CD4-positive, alpha-beta memory T cell (primary cell): ENCODE measurements at regions of chr3 and their contacts with region 1.

Region 1: DNA sequence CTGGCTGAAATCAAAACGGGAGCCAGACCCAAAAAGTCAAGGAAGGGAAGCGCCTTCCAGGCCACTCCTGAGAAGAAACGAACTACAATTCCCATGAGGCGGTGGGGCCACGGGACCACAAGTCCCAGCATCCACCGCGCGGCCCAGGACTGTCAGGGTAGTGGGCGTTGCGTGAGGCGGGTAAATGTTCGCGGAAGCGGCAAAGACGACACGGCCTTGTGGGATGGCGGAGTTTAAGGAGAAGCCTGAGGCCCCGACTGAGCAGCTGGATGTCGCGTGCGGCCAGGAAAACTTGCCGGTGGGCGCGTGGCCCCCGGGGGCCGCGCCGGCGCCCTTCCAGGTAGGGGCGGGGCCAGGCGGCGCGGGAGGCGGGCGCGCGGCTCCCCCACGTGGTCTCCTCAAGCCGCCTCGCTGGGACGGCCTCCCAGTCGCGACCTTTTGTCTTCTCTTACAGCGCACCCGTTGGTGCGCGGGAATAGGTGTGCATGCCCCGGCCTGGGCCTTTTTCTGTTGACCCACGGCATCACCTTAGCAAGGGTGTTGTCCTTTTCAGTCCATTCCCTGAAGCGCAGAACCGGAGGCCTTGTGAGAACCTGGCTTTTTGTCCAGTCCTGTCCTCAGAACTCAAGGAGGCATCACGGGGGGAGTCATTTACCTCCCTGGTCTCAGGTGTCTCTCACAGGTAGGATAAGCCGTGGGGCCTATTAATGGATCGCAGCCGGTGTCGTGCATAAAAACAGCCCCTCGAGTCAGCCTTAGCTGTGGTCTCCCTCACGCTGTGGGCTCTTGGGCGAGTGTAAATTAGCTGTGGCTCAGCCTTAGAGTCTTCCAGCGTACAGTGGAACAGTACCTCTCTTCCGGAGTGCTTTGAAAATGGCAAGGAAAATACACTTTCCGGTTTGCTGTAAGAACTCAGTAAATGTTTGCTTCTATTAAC is at the start of gene SETMAR:
- DNase-seq: peak; percentile 82 to 85 (median 82)
- H3K4me3 ChIP-seq: peak within 1 kb of the TSS; percentile 68 to 99
- H3K4me3 Mint-ChIP-seq: peak within 1 kb of the TSS; percentile 97 to 99 (median 97)
- H3K27ac ChIP-seq: peak within 1 kb of the TSS; percentile 87
- H3K27ac Mint-ChIP-seq: peak within 1 kb of the TSS; percentile 92 to 100 (median 99)
- H3K4me1 ChIP-seq: peaks cover 23% of the 10 kb centered on the region
- H3K4me1 Mint-ChIP-seq: peaks cover 8 to 33% (median 16%) of the 10 kb centered on the region in 4 donors
- H3K27me3 ChIP-seq: no peaks in the 10 kb centered on the region
- H3K27me3 Mint-ChIP-seq: no peaks in the 10 kb centered on the region
- total RNA-seq, gene SETMAR: 11.1 to 11.5 TPM

Region 2: DNA sequence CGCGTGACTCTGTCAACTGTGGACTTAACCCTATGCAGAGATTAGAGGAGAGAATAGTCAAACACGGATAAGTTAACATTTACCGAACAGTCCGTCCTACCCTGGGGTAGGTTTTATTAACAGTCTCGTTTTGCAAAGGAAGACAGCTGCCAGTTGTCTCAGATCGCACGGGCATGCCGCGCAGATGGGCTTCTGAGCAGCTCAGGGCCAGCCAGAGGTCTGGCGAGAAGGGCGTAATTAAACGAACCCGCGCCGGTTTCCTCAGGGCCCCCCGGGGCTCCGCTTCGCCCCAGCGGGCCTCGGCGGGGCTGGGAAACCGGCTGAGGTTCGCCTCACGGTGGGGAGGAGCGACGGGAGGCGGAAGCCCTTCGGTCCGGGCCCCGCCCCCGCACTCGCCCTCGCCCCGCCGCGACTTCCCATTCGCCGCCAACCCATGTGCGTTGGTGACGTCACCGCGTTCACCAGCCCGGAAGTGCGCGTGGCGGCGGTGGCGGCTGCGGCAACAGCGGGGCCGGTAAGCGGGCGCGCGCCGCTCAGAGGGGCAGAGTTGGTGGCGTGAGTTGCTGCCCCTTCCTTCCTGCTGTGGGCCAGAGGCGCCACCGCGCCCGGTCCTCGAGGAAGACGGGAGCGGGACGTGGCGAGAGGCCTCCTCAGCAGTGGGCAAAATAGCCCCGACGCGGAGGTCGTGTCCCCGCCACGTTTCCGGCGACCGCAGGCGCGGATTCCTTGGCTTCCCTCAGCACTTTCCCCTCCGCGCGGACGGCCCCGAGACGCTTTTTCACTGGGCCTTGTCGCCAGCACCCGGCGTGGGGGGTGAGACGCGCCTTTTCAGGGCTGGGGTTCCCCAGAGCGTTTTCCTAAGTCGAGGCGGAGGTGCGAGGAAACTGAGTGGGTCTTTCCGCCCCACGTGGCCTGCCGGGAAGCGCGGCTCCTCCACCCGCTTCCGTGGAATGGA is 1176.7 kb before region 1 on chr3 and contains the start of gene TRNT1:
- CTCF ChIA-PET with region 1: no interaction called
- POLR2A ChIA-PET with region 1: no interaction called
- intact Hi-C with region 1: loop called (anchors 1 kb)
- DNase-seq: peak; percentile 94 to 96 (median 95)
- H3K4me3 ChIP-seq: peak within 1 kb of the TSS; percentile 80 to 89
- H3K4me3 Mint-ChIP-seq: peak within 1 kb of the TSS; percentile 95 to 98 (median 96)
- H3K27ac ChIP-seq: peak within 1 kb of the TSS; percentile 93
- H3K27ac Mint-ChIP-seq: peak within 1 kb of the TSS; percentile 98 to 100 (median 99)
- H3K4me1 ChIP-seq: peaks cover 37% of the 10 kb centered on the region
- H3K4me1 Mint-ChIP-seq: peaks cover 21 to 50% (median 40%) of the 10 kb centered on the region in 4 donors
- H3K27me3 ChIP-seq: no peaks in the 10 kb centered on the region
- H3K27me3 Mint-ChIP-seq: no peaks in the 10 kb centered on the region
- total RNA-seq, gene TRNT1: 44.7 to 44.8 TPM

Region 3: DNA sequence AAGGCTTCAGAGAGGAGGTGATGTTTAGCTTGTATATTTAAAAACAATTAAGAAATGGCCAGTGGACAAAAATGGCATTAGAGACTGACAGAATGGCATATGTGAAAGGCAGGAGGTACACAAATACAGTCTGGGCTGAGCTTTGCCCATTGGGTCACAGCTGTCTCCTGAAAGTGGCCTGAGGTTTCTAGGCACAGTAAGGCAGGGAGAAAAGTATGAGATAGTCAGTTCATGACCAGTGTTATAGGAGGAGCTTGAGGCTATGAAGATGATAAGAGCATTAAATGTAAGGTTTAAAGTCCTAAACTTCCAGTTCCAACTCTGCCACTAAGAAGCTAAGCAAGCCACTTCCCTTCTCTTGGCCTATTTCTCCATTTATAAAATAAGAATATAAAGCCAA is 111.5 kb before region 1 on chr3:
- CTCF ChIA-PET with region 1: no interaction called
- POLR2A ChIA-PET with region 1: no interaction called
- intact Hi-C with region 1: no loop called
- DNase-seq: no peak
- H3K4me3 ChIP-seq: no peak overlapping the region
- H3K4me3 Mint-ChIP-seq: no peak overlapping the region
- H3K27ac ChIP-seq: no peak overlapping the region
- H3K27ac Mint-ChIP-seq: no peak overlapping the region
- H3K4me1 ChIP-seq: no peaks in the 10 kb centered on the region
- H3K4me1 Mint-ChIP-seq: no peaks in the 10 kb centered on the region
- H3K27me3 ChIP-seq: no peaks in the 10 kb centered on the region
- H3K27me3 Mint-ChIP-seq: no peaks in the 10 kb centered on the region

Region 4: DNA sequence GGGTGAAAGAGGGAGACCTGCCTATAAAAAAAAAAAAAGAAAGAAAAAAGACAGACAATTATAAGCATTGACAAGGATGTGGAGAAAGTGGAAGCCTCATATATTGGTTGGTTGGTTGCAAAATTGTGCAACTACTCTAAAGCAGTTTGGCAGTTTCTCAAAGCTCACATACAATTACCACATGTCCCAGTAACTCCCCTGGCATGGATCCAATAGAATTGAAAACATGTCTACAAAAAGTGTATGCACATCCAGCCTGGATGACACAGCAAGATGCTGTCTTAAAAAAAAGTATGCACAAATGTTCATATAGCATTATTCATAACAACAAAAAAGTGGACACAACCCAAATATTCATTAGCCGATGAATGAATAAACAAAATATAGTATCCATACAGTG is 19.2 kb after region 1 on chr3:
- CTCF ChIA-PET with region 1: no interaction called
- POLR2A ChIA-PET with region 1: no interaction called
- intact Hi-C with region 1: no loop called
- DNase-seq: no peak
- H3K4me3 ChIP-seq: no peak overlapping the region
- H3K4me3 Mint-ChIP-seq: no peak overlapping the region
- H3K27ac ChIP-seq: no peak overlapping the region
- H3K27ac Mint-ChIP-seq: peak overlapping the region in 2 of 7 donors; percentile 34 to 76
- H3K4me1 ChIP-seq: no peaks in the 10 kb centered on the region
- H3K4me1 Mint-ChIP-seq: peaks cover 0 to 4% (median under 1%) of the 10 kb centered on the region in 4 donors
- H3K27me3 ChIP-seq: no peaks in the 10 kb centered on the region
- H3K27me3 Mint-ChIP-seq: no peaks in the 10 kb centered on the region

Region 5: DNA sequence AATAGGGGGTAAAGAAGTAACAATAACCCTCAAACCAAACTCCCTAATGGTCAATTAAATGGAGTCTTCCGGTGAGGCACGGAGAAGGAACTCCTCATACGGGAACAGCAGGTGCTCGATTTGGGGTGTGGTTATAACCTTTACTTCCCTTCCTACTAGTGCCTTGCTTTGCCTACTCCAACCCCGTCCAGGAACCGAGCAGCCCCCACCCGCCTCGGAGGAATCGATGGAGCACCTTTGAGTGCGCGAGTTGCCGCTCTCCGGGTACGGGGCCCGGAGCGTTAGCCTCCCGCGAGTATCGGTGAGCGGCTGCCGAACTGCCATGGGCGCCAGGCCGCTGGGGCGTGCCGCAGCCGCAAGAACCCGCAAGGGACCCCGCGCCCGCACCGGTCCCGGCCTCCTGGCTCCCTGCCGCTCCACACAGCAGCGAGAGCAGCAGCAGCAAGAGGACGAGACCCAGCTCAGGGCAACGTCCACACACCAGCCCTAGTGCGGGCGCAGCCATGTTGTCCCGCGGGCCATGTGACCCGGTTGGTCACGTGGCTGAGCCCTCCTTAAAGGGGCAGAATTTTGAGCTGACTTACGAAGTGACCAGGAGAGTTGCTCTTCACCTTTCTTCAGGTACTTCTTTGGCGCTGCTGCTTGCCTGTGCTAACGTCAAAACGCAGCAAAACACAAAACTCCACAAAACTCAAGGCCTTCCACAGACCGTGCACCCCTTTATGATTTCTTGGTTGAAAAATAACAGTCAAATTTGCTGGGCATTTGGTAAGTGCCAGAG is 163.5 kb after region 1 on chr3 and contains the start of gene SUMF1:
- CTCF ChIA-PET with region 1: no interaction called
- POLR2A ChIA-PET with region 1: no interaction called
- intact Hi-C with region 1: loop called (anchors 2 kb)
- DNase-seq: peak; percentile 67 to 81 (median 74)
- H3K4me3 ChIP-seq: peak within 1 kb of the TSS; percentile 71 to 76
- H3K4me3 Mint-ChIP-seq: peak within 1 kb of the TSS; percentile 91 to 97 (median 93)
- H3K27ac ChIP-seq: peak within 1 kb of the TSS; percentile 71
- H3K27ac Mint-ChIP-seq: peak within 1 kb of the TSS; percentile 84 to 97 (median 93)
- H3K4me1 ChIP-seq: peaks cover 16% of the 10 kb centered on the region
- H3K4me1 Mint-ChIP-seq: peaks cover 9 to 22% (median 17%) of the 10 kb centered on the region in 4 donors
- H3K27me3 ChIP-seq: no peaks in the 10 kb centered on the region
- H3K27me3 Mint-ChIP-seq: no peaks in the 10 kb centered on the region
- total RNA-seq, gene SUMF1: 13.9 to 14.9 TPM

Region 6: GRCh38 chr3:5122030-5122740 is 818.7 kb after region 1 on chr3 and contains the start of gene ARL8B:
- CTCF ChIA-PET with region 1: no interaction called
- POLR2A ChIA-PET with region 1: no interaction called
- intact Hi-C with region 1: loop called (anchors 10 kb)
- DNase-seq: peak; percentile 87 to 90 (median 88)
- H3K4me3 ChIP-seq: peak within 1 kb of the TSS; percentile 64 to 93
- H3K4me3 Mint-ChIP-seq: peak within 1 kb of the TSS; percentile 84 to 97 (median 92)
- H3K27ac ChIP-seq: peak within 1 kb of the TSS; percentile 94
- H3K27ac Mint-ChIP-seq: peak within 1 kb of the TSS; percentile 92 to 97 (median 93)
- H3K4me1 ChIP-seq: peaks cover 50% of the 10 kb centered on the region
- H3K4me1 Mint-ChIP-seq: peaks cover 26 to 52% (median 39%) of the 10 kb centered on the region in 4 donors
- H3K27me3 ChIP-seq: no peaks in the 10 kb centered on the region
- H3K27me3 Mint-ChIP-seq: no peaks in the 10 kb centered on the region
- total RNA-seq, gene ARL8B: 55.5 to 60.5 TPM

Region 7: DNA sequence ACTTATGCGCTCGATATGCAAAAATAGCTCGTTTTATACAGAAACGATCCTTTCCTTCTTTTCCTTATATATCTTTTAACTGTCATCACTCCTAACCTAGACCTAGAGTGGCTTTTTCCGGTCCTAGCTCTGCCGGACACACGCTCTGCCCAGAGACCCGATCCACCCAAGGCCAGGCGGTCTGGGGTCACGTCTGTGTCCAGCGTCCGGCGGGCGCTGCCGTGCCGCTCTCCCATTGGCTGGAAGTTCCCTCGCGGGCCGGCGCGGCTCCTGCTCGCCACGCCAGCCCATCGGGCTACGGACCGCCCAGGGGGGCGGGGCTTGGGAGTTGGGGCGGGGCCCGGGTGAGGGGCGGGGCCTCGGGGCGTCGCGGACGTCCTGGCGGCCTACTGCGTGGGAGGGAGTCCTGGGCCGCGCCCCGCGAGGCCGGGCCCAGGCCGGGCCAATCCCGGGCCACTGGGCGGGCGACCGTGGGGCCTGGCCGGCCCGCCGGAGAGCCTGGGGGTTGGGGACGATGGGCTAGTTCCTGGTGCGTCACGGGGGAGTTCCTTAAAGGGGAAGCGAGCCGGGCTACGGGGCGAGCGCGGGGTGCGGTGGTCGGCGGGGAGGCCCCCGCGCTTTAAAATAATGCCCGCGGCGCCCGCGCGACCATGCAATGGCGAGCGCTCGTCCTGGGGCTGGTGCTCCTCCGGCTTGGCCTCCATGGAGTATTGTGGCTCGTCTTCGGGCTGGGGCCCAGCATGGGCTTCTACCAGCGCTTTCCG is 883.9 kb after region 1 on chr3 and contains the start of gene EDEM1:
- CTCF ChIA-PET with region 1: no interaction called
- POLR2A ChIA-PET with region 1: no interaction called
- intact Hi-C with region 1: loop called (anchors 2 kb)
- DNase-seq: peak; percentile 92 to 94 (median 93)
- H3K4me3 ChIP-seq: peak within 1 kb of the TSS; percentile 80 to 85
- H3K4me3 Mint-ChIP-seq: peak within 1 kb of the TSS; percentile 93 to 100 (median 98)
- H3K27ac ChIP-seq: peak within 1 kb of the TSS; percentile 87
- H3K27ac Mint-ChIP-seq: peak within 1 kb of the TSS; percentile 98 to 99 (median 99)
- H3K4me1 ChIP-seq: peaks cover 16% of the 10 kb centered on the region
- H3K4me1 Mint-ChIP-seq: peaks cover 26 to 46% (median 32%) of the 10 kb centered on the region in 4 donors
- H3K27me3 ChIP-seq: no peaks in the 10 kb centered on the region
- H3K27me3 Mint-ChIP-seq: no peaks in the 10 kb centered on the region
- total RNA-seq, gene EDEM1: 146 to 153 TPM